Activated naive CD4-positive, alpha-beta T cell treated with anti-CD3 and anti-CD28 coated beads for 36 hours (primary cell): ENCODE measurements at regions of chr22 and their contacts with region 1.

Region 1: DNA sequence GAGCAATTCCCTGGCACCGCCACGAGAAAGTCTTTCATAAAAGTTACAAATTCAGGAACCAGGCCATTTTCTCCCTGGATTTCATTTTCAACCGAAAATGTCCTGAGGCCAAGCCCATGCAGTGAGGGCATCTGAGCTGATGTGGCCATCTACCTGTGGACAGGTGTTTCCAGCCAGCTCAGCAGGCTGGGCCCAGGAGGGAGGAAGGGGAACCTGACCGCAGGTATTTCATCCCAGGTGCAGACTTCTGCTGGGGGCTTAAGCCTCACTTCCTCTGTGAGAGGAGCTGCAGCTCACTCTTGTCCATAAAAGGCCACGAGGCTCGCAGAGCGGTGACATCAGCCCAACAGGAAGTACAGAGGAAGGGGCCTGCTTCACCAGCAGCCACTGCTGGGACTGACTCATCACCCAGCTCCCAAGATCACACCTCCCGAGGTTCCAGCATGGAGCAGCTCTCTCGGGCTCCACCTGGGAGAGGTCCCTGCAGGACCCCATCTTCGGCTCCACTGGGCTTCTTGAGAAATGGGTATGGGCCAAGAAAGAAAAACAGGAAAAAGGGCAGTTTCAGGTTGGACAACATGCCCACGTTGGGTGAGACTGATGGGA is 56.4 kb downstream of the MYH9 start:
- DNase-seq: peak; percentile 92
- H3K4me3 Mint-ChIP-seq: peak overlapping the region; percentile 80
- H3K27ac Mint-ChIP-seq: peak overlapping the region; percentile 100
- H3K4me1 Mint-ChIP-seq: peaks cover 97% of the 10 kb centered on the region
- H3K27me3 Mint-ChIP-seq: no peaks in the 10 kb centered on the region

Region 2: DNA sequence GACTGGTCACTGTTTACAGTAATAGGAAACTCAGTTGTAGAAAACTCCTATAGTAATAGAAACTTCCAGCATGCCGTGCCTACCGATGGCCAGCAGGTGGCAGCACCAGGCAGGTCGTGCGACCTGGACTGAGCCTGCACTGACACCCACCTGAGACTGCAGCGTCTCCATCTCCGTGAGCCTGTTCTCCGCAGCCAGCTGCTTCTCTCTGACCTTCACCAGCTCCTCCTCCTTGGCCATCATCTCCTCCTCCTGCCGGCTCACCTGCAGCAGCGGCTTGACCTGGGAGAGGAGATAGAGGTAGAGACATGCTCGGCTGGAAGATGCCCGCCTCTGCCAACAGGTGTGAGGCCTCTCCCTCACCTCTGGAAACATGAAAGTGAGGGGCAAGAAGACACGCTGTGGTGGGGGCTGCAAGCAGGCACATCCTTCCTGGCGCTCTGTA is 30.0 kb before region 1 on chr22:
- CTCF ChIA-PET with region 1: interaction called, 11 read pairs
- intact Hi-C with region 1: loop called (anchors 1 kb)
- DNase-seq: peak; percentile 89
- H3K4me3 Mint-ChIP-seq: no peak overlapping the region
- H3K27ac Mint-ChIP-seq: peak overlapping the region; percentile 72
- H3K4me1 Mint-ChIP-seq: peaks cover 4% of the 10 kb centered on the region
- H3K27me3 Mint-ChIP-seq: no peaks in the 10 kb centered on the region

Region 3: DNA sequence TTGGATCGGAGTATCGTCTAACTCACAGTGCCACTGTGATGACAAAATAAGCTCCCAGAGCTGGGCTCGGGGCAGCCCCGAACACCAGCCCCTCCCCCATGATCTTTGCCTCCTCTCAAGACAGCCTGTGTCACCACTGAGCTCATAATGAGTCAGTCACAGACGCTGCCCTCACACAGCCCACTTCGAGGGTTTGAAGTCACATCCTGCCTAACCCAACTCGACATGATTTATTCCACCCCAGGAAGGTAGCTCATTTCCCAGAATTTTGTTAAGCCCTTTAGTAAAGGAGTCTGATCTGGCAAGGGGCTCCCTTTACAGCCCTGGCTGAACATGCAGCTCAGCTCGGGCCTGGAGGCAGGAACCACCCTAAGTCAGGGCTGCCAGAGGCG is 33.6 kb after region 1 on chr22:
- CTCF ChIA-PET with region 1: interaction called, 21 read pairs
- intact Hi-C with region 1: loop called (anchors 1 kb)
- DNase-seq: peak; percentile 98
- H3K4me3 Mint-ChIP-seq: peak overlapping the region; percentile 53
- H3K27ac Mint-ChIP-seq: peak overlapping the region; percentile 96
- H3K4me1 Mint-ChIP-seq: peaks cover 99% of the 10 kb centered on the region
- H3K27me3 Mint-ChIP-seq: no peaks in the 10 kb centered on the region

Region 4: GRCh38 chr22:36379593-36380361 is 48.4 kb after region 1 on chr22:
- CTCF ChIA-PET with region 1: interaction called, 34 read pairs
- intact Hi-C with region 1: loop called (anchors 2 kb)
- DNase-seq: peak; percentile 61
- H3K4me3 Mint-ChIP-seq: peak overlapping the region; percentile 79
- H3K27ac Mint-ChIP-seq: peak overlapping the region; percentile 100
- H3K4me1 Mint-ChIP-seq: peaks cover 93% of the 10 kb centered on the region
- H3K27me3 Mint-ChIP-seq: no peaks in the 10 kb centered on the region

Region 5: GRCh38 chr22:36435516-36436415 is 104.4 kb after region 1 on chr22:
- CTCF ChIA-PET with region 1: interaction called, 3 read pairs
- intact Hi-C with region 1: loop called (anchors 1 kb)
- DNase-seq: peak; percentile 86
- H3K4me3 Mint-ChIP-seq: peak overlapping the region; percentile 49
- H3K27ac Mint-ChIP-seq: peak overlapping the region; percentile 85
- H3K4me1 Mint-ChIP-seq: peaks cover 42% of the 10 kb centered on the region
- H3K27me3 Mint-ChIP-seq: no peaks in the 10 kb centered on the region

Region 6: GRCh38 chr22:36470162-36470993 is 139.0 kb after region 1 on chr22:
- CTCF ChIA-PET with region 1: interaction called, 18 read pairs
- intact Hi-C with region 1: loop called (anchors 1 kb)
- DNase-seq: peak; percentile 90
- H3K4me3 Mint-ChIP-seq: no peak overlapping the region
- H3K27ac Mint-ChIP-seq: peak overlapping the region; percentile 46
- H3K4me1 Mint-ChIP-seq: peaks cover 30% of the 10 kb centered on the region
- H3K27me3 Mint-ChIP-seq: no peaks in the 10 kb centered on the region